Naive thymus-derived CD4-positive, alpha-beta T cell (primary cell): ENCODE measurements at regions of chr15 and their contacts with region 1.

Region 1: DNA sequence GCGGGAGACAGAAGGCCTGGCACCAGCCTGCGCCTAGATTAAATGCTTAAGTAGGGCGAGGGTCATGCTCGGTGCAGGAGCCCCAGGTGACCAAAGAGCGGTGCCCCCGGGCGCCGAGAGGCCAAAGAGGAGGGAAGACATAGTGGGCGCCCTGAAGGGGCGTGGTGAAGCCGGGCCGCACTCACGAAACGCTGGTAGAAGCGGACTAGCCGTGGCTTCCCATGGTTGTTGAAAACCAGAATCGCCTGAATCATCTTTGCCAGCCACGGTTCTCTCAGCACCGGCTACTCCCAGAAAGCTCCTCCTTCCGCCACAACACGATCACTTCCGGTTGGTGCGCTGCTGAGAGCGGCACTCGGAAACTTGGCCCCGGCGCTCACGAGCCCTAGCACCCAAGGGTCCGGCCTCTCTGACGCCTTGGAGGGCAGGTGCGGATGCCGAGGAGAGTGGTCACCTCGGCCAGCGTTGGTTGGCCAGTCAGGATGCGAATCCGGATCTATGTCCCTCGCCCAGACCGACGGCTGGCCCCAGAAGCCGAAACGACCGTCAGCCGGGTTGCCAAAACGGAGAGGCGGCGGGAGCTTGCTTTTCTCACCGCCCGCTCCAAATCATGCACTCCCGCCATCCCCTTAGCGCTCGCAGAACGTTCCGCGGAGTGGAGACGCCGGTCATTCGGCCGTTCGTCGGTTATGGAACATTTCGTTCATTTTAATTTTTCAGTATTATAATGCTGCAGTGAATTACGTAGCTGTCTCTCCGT is at the start of gene AP3S2:
- DNase-seq: peak; percentile 79 to 90 (median 86)
- ATAC-seq: peak; percentile 97
- H3K4me3 ChIP-seq: peak within 1 kb of the TSS; percentile 88
- H3K4me3 Mint-ChIP-seq: peak within 1 kb of the TSS; percentile 89 to 99 (median 96)
- H3K27ac ChIP-seq: peak within 1 kb of the TSS; percentile 81
- H3K27ac Mint-ChIP-seq: peak within 1 kb of the TSS; percentile 91 to 98 (median 95)
- H3K4me1 ChIP-seq: peaks cover 6 to 14% of the 10 kb centered on the region in 2 donors
- H3K4me1 Mint-ChIP-seq: peaks cover 17 to 46% (median 36%) of the 10 kb centered on the region in 7 donors
- H3K27me3 ChIP-seq: no peaks in the 10 kb centered on the region
- H3K27me3 Mint-ChIP-seq: no peaks in the 10 kb centered on the region
- total RNA-seq, gene AP3S2: 24.3 to 31.7 (median 28.4) TPM

Region 2: DNA sequence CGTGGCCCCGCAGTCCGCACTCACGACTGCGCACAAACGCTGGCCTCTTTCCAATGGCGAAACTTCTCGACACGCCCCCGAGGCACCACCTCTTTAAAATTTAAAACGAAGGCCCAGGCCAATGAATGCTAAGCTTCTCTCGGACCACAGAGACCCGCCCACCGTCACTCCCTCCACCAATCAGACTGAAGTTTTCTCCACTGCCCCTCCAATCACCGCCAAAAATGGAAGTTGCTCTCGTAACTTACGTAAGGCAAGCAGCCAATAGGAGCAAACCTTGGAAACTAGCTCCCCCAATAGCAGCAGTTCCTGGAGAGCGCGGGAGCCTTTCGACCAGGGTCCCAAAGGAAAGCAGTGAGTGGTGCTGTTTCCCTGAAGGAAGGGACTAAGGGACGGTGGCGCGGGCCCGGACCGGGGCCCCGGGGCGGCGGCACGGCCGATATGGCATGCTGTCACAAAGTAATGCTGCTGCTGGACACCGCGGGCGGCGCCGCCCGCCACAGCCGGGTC is 318.7 kb before region 1 on chr15 and contains the start of gene TICRR:
- CTCF ChIA-PET with region 1: no interaction called
- POLR2A ChIA-PET with region 1: no interaction called
- intact Hi-C with region 1: loop called in 1 of 2 experiments (anchors 1 kb)
- DNase-seq: peak; percentile 69 to 98 (median 97)
- ATAC-seq: peak; percentile 99
- H3K4me3 ChIP-seq: peak within 1 kb of the TSS; percentile 86
- H3K4me3 Mint-ChIP-seq: peak within 1 kb of the TSS; percentile 77 to 96 (median 86)
- H3K27ac ChIP-seq: peak within 1 kb of the TSS; percentile 34
- H3K27ac Mint-ChIP-seq: peak within 1 kb of the TSS; percentile 52 to 87 (median 74)
- H3K4me1 ChIP-seq: no peaks in the 10 kb centered on the region
- H3K4me1 Mint-ChIP-seq: peaks cover 0 to 38% (median 8%) of the 10 kb centered on the region in 7 donors
- H3K27me3 ChIP-seq: no peaks in the 10 kb centered on the region
- H3K27me3 Mint-ChIP-seq: peaks cover 9 to 25% (median 13%) of the 10 kb centered on the region in 5 donors
- total RNA-seq, gene TICRR: 0.11 to 15.5 (median 0.19) TPM

Region 3: GRCh38 chr15:89750560-89751542 is 143.0 kb before region 1 on chr15 and contains the start of gene MESP1:
- CTCF ChIA-PET with region 1: no interaction called
- POLR2A ChIA-PET with region 1: no interaction called
- intact Hi-C with region 1: loop called in 1 of 2 experiments (anchors 5 kb)
- DNase-seq: peak; percentile 71 to 89 (median 82)
- ATAC-seq: peak; percentile 94
- H3K4me3 ChIP-seq: peak within 1 kb of the TSS; percentile 64
- H3K4me3 Mint-ChIP-seq: peak within 1 kb of the TSS; percentile 63 to 83 (median 77)
- H3K27ac ChIP-seq: peak within 1 kb of the TSS; percentile 31
- H3K27ac Mint-ChIP-seq: peak within 1 kb of the TSS in 3 of 9 donors; percentile 25 to 63 (median 53)
- H3K4me1 ChIP-seq: no peaks in the 10 kb centered on the region
- H3K4me1 Mint-ChIP-seq: peaks cover 0 to 8% (median 3%) of the 10 kb centered on the region in 7 donors
- H3K27me3 ChIP-seq: no peaks in the 10 kb centered on the region
- H3K27me3 Mint-ChIP-seq: peaks cover 0 to 50% (median 15%) of the 10 kb centered on the region in 5 donors
- total RNA-seq, gene MESP1: 0.38 to 1.2 (median 0.50) TPM in 3 of 5 experiments, not detected in the others

Region 4: GRCh38 chr15:90001683-90002427 is 108.0 kb after region 1 on chr15:
- CTCF ChIA-PET with region 1: interaction called, 3 read pairs
- POLR2A ChIA-PET with region 1: interaction called, 4 read pairs
- intact Hi-C with region 1: loop called (anchors 1 kb)
- DNase-seq: peak; percentile 41 to 78 (median 65)
- ATAC-seq: peak; percentile 68
- H3K4me3 ChIP-seq: no peak overlapping the region
- H3K4me3 Mint-ChIP-seq: peak overlapping the region; percentile 85 to 98 (median 90)
- H3K27ac ChIP-seq: peak overlapping the region; percentile 61
- H3K27ac Mint-ChIP-seq: peak overlapping the region; percentile 85 to 97 (median 91)
- H3K4me1 ChIP-seq: peaks cover 6 to 8% of the 10 kb centered on the region in 2 donors
- H3K4me1 Mint-ChIP-seq: peaks cover 37 to 57% (median 48%) of the 10 kb centered on the region in 7 donors
- H3K27me3 ChIP-seq: no peaks in the 10 kb centered on the region
- H3K27me3 Mint-ChIP-seq: peaks cover 0 to 6% (median 0%) of the 10 kb centered on the region in 5 donors

Region 5: DNA sequence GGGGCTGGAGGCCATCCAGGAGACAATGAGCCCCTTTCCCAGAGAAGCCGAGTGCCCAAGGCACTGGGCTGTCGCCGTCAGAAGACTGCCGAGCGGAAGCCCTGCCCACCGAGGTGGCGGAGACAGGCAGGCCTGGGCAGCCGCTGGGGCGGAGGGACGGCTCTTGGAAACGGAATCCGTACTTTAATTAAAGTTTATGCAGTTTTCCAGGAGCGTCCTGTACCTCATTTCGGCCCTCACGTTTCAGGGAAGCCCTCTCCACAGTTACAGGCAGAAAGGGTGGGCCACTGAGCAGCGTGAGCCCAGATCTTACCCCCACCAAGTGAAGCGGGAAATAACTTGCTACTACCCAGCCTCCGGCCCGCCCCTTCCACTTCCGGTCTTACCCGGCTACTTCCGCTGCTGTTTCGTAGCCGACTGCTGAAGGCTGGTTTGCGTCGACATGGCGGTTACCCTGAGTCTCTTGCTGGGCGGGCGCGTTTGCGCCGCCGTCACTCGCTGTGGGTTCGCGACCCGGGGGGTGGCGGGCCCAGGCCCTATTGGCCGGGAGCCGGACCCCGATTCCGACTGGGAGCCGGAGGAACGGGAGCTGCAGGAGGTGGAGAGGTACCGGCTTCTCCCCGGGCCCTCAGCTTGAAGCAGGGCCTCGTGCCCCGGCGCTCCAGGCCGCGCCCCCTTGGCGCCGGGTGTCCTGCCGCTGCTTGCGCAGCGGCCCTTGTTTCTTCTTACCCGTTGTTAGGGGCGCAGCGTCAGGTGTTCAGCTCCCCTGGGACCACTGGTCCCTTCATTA is 371.6 kb after region 1 on chr15 and contains the start of gene NGRN:
- CTCF ChIA-PET with region 1: no interaction called
- POLR2A ChIA-PET with region 1: no interaction called
- intact Hi-C with region 1: loop called in 1 of 2 experiments (anchors 10 kb)
- DNase-seq: peak; percentile 81 to 96 (median 93)
- ATAC-seq: peak; percentile 94
- H3K4me3 ChIP-seq: peak within 1 kb of the TSS; percentile 84
- H3K4me3 Mint-ChIP-seq: peak within 1 kb of the TSS; percentile 95 to 99 (median 97)
- H3K27ac ChIP-seq: peak within 1 kb of the TSS; percentile 96
- H3K27ac Mint-ChIP-seq: peak within 1 kb of the TSS; percentile 98 to 100 (median 99)
- H3K4me1 ChIP-seq: peaks cover 36 to 40% of the 10 kb centered on the region in 2 donors
- H3K4me1 Mint-ChIP-seq: peaks cover 22 to 60% (median 48%) of the 10 kb centered on the region in 7 donors
- H3K27me3 ChIP-seq: no peaks in the 10 kb centered on the region
- H3K27me3 Mint-ChIP-seq: no peaks in the 10 kb centered on the region
- total RNA-seq, gene NGRN: 34.1 to 51.5 (median 48.4) TPM

Region 6: GRCh38 chr15:90451053-90451850 is 557.4 kb after region 1 on chr15:
- CTCF ChIA-PET with region 1: no interaction called
- POLR2A ChIA-PET with region 1: no interaction called
- intact Hi-C with region 1: no loop called
- DNase-seq: no peak
- ATAC-seq: no peak
- H3K4me3 ChIP-seq: no peak overlapping the region
- H3K4me3 Mint-ChIP-seq: no peak overlapping the region
- H3K27ac ChIP-seq: no peak overlapping the region
- H3K27ac Mint-ChIP-seq: peak overlapping the region in 1 of 9 donors; percentile 27
- H3K4me1 ChIP-seq: no peaks in the 10 kb centered on the region
- H3K4me1 Mint-ChIP-seq: peaks cover 0 to 4% (median 0%) of the 10 kb centered on the region in 7 donors
- H3K27me3 ChIP-seq: no peaks in the 10 kb centered on the region
- H3K27me3 Mint-ChIP-seq: no peaks in the 10 kb centered on the region